WTC11 (cell line): ENCODE measurements at regions of chr1 and their contacts with region 1.

Region 1: GRCh38 chr1:227449051-227449450 is 114.3 kb upstream of the ZNF678 start:
- DNase-seq: peak; percentile 65
- ATAC-seq: peak; percentile 90
- H3K4me3 Mint-ChIP-seq: no peak overlapping the region
- H3K27ac Mint-ChIP-seq: no peak overlapping the region
- H3K4me1 Mint-ChIP-seq: peaks cover 4% of the 10 kb centered on the region
- H3K27me3 Mint-ChIP-seq: peaks cover 5% of the 10 kb centered on the region; the same call in 1 of the 2 replicates
- CTCF ChIP-seq: no peak

Region 2: DNA sequence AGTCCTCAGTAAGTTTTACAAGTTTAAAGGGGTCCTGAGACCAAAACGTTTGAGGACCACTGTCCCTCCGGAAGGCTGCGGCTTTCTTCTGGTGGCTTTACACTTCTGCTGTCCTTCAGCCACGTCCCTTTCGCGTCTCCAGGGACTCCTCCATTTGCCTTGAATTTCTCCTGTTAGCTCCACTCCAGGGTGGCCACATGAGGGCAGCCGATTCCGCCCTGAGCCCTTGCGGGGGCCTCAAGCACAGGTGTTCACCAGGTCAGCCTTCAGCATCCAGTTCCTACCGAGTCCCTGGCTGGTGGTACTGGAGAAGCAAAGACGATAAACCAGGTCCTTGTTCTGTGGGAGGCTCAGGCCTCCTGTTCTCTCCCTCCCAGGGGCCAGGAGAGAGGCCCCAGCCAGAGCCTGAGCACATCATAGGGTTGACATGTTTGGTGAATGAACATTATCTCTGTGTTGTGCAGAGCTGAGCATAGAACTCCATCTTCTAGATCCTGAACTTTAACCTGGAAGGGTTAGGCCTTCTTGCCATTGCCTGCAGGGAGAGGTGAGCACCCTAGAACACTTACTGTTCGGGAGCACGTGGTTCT is 536.4 kb before region 1 on chr1:
- CTCF ChIA-PET with region 1: interaction called, 10 read pairs
- POLR2A ChIA-PET with region 1: no interaction called
- DNase-seq: peak; percentile 84
- ATAC-seq: peak; percentile 97
- H3K4me3 Mint-ChIP-seq: no peak overlapping the region
- H3K27ac Mint-ChIP-seq: no peak overlapping the region
- H3K4me1 Mint-ChIP-seq: peaks cover 5% of the 10 kb centered on the region; the same call in 1 of the 2 replicates
- H3K27me3 Mint-ChIP-seq: no peaks in the 10 kb centered on the region
- CTCF ChIP-seq: no peak; the same call in 1 of the 2 replicates

Region 3: DNA sequence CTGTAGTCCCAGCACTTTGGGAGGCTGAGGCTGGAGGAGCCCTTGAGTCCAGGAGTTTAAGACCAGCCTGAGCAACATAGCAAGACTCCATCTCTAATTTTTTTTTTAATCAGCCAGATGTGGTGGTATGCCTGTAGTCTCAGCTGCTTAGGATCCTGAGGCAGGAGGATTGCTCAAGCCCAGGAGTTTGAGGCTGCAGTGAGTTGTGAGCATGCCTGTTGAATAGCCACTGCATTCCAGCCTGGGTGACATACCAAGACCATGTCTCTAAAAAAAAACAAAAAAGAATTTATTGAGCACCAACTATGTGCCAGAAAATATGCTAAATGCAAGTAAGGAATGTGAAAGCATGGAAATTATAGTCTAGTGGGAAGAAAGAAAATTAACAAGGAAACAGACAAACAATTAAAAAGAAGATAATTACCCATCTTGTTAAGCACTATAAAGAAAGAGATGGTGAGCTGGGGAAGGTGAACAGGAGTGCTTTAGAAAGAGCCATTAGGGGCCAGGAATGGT is 10.3 kb after region 1 on chr1:
- CTCF ChIA-PET with region 1: interaction called, 12 read pairs
- POLR2A ChIA-PET with region 1: no interaction called
- DNase-seq: no peak
- ATAC-seq: no peak
- H3K4me3 Mint-ChIP-seq: no peak overlapping the region
- H3K27ac Mint-ChIP-seq: no peak overlapping the region
- H3K4me1 Mint-ChIP-seq: peaks cover 3% of the 10 kb centered on the region; the same call in 1 of the 2 replicates
- H3K27me3 Mint-ChIP-seq: no peaks in the 10 kb centered on the region; the same call in 1 of the 2 replicates
- CTCF ChIP-seq: no peak